ENCODE measurements at regions of chr14 and their contacts with region 1.

Region 1: GRCh38 chr14:58072288-58073071 is 79.5 kb downstream of the ARMH4 start:
- DNase-seq: peak; percentile 63 to 72
- ATAC-seq: peak; percentile 93 to 98
- H3K4me3 ChIP-seq: peak overlapping the region; percentile 36; the same call in 1 of the 3 replicates
- H3K27ac ChIP-seq: no peak overlapping the region
- H3K4me1 ChIP-seq: no peaks in the 10 kb centered on the region
- CTCF ChIP-seq: peak; percentile 86
- EP300 ChIP-seq: no peak
- POLR2A ChIP-seq: no peak
- RAD21 ChIP-seq: peak; percentile 82 to 85

Region 2: DNA sequence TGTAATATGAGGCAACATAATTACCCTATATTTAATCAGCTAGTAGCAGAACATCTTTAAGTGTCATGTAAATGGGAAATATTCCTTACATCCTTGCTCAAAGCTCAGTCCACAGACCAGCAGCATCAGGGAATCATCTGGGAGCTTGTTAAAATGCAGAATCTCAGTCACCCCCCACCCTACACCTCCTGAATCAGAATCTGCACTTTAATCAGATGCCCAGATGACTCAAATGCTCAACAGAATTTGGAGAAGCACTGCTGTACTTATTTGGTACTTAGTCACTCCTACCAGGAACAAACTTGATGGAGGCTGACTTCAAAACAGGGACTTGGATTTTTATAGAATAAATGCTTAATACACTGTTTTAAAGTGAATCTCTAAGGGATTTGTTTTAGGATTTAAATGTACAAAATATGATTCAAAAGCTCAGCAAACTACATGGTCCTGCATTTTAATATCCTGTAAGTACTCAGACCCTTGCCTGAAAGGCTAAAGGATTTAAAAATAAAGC is 16.9 kb before region 1 on chr14:
- CTCF ChIA-PET with region 1: interaction called, 13 read pairs
- POLR2A ChIA-PET with region 1: no interaction called
- DNase-seq: no peak
- ATAC-seq: no peak
- H3K4me3 ChIP-seq: no peak overlapping the region
- H3K27ac ChIP-seq: no peak overlapping the region
- H3K4me1 ChIP-seq: no peaks in the 10 kb centered on the region
- CTCF ChIP-seq: no peak
- EP300 ChIP-seq: no peak
- POLR2A ChIP-seq: no peak
- RAD21 ChIP-seq: no peak

Region 3: DNA sequence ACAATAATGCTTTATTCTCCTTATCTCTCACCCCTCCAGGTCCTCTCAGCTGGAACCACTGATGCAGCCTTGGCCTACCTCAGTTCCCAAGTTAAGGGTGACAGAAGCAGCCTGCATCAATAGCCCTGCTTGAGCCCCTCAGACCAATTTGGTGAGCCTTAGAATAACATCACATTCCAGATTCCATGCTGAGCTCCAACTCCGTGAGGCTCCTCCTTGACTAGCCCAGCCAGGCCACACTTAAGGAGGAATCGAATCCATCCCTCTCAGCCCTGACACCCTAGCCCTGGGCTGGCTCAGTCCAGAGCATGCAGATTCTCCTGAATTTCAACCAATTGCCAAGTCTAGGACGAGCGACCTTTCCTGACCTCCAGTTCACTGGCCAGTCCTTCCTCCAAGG is 11.6 kb before region 1 on chr14:
- CTCF ChIA-PET with region 1: interaction called, 26 read pairs
- POLR2A ChIA-PET with region 1: no interaction called
- DNase-seq: no peak
- ATAC-seq: no peak
- H3K4me3 ChIP-seq: no peak overlapping the region
- H3K27ac ChIP-seq: no peak overlapping the region
- H3K4me1 ChIP-seq: no peaks in the 10 kb centered on the region
- CTCF ChIP-seq: no peak
- EP300 ChIP-seq: no peak
- POLR2A ChIP-seq: no peak
- RAD21 ChIP-seq: no peak

Region 4: GRCh38 chr14:58777541-58777979 is 705.1 kb after region 1 on chr14:
- CTCF ChIA-PET with region 1: no interaction called
- POLR2A ChIA-PET with region 1: no interaction called
- DNase-seq: no peak
- ATAC-seq: no peak
- H3K4me3 ChIP-seq: no peak overlapping the region
- H3K27ac ChIP-seq: no peak overlapping the region
- H3K4me1 ChIP-seq: no peaks in the 10 kb centered on the region
- CTCF ChIP-seq: no peak
- EP300 ChIP-seq: no peak
- POLR2A ChIP-seq: no peak
- RAD21 ChIP-seq: no peak

Measured in A549 (cell line).